Esophagus muscularis mucosa (tissue), 4 donors: ENCODE measurements at regions of chr15 and their contacts with region 1.

Region 1: DNA sequence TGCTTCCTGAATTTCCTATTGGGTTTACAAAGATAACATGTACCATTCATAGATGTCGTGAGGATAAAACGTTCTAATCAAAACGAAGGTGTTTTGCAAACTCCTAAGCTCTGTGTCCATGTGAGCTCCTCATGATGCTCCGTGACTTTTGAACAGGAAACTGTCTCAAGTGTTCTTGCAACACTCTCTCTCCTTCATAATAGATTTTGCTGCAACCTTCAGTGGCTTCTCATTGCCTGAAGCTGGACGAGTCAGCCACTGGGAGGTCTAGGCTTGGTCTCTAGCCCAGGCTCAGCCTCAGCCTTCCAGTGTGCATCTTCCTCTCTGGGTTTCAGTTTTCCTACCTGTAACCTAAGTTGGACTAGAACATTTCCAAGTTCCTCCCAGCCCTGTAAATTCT is 18.7 kb upstream of the BCL2A1 start:
- DNase-seq: no peak
- H3K4me3 ChIP-seq: no peak overlapping the region
- H3K27ac ChIP-seq: no peak overlapping the region
- H3K4me1 ChIP-seq: peaks cover 0 to 3% (median 0%) of the 10 kb centered on the region in 4 donors
- H3K27me3 ChIP-seq: no peaks in the 10 kb centered on the region
- CTCF ChIP-seq: no peak
- EP300 ChIP-seq: no peak
- POLR2A ChIP-seq: no peak

Region 2: DNA sequence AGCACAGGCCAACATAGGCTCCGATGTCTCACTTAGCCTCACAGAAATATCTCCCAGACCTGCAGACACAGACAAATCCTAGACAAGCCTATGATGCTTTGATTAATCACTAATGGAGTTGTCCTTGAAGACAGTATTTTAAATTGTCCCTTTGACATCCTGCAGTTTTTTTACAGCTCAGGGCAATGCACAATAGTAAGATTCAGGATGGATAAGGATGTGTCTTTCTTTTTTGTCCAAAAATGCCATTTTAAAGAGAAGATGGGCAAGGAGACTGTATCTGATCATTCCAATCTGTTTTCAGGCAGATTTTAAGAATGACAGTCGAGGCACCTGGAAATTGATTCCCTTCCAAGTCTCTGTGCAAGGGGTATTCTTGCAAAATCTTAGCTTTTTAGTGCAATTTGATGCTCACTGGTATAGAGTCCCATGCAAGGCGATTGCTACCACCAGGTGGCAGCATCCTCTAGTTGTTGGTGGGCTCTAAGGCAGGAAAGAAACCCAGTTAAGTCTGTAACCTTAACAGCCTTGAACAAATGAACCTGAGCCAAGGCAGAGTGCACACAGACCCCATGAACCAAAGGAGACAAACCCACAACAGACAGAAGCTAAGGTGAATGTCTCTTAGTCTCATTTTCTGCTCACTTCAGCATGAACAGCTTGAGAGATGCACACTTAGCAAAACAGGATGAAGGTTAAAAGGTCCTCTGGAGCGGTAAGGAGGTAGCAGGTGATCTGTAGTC is 608.8 kb before region 1 on chr15:
- intact Hi-C with region 1: loop called (anchors 2 kb)
- DNase-seq: no peak
- H3K4me3 ChIP-seq: no peak overlapping the region
- H3K27ac ChIP-seq: no peak overlapping the region
- H3K4me1 ChIP-seq: peaks cover 0 to 4% (median 0%) of the 10 kb centered on the region in 4 donors
- H3K27me3 ChIP-seq: no peaks in the 10 kb centered on the region
- CTCF ChIP-seq: peak; percentile 76 to 91 (median 89)
- EP300 ChIP-seq: no peak
- POLR2A ChIP-seq: no peak

Region 3: GRCh38 chr15:79853458-79854328 is 136.0 kb before region 1 on chr15:
- intact Hi-C with region 1: loop called (anchors 5 kb)
- DNase-seq: no peak
- H3K4me3 ChIP-seq: no peak overlapping the region
- H3K27ac ChIP-seq: no peak overlapping the region
- H3K4me1 ChIP-seq: no peaks in the 10 kb centered on the region
- H3K27me3 ChIP-seq: no peaks in the 10 kb centered on the region
- CTCF ChIP-seq: peak; percentile 64 to 89 (median 84)
- EP300 ChIP-seq: no peak
- POLR2A ChIP-seq: no peak

Region 4: GRCh38 chr15:79896637-79897379 is 92.9 kb before region 1 on chr15 and contains the start of gene MTHFS:
- intact Hi-C with region 1: loop called (anchors 2 kb)
- DNase-seq: peak; percentile 92
- H3K4me3 ChIP-seq: peak within 1 kb of the TSS; percentile 74 to 87 (median 86)
- H3K27ac ChIP-seq: peak within 1 kb of the TSS; percentile 93 to 95 (median 94)
- H3K4me1 ChIP-seq: peaks cover 4 to 18% (median 17%) of the 10 kb centered on the region in 4 donors
- H3K27me3 ChIP-seq: no peaks in the 10 kb centered on the region
- CTCF ChIP-seq: peak; percentile 52 to 54 (median 54)
- EP300 ChIP-seq: no peak
- POLR2A ChIP-seq: no peak
- total RNA-seq, gene MTHFS: 8.8 to 21.2 (median 13.1) TPM